Adrenal gland (tissue), 19 donors: ENCODE measurements at regions of chr2 and their contacts with region 1.

Region 1: GRCh38 chr2:187842978-187843847 is 289.0 kb upstream of the TFPI start:
- DNase-seq: peak in 1 of 7 donors; percentile 5
- H3K4me3 ChIP-seq: no peak overlapping the region
- H3K27ac ChIP-seq: no peak overlapping the region
- H3K4me1 ChIP-seq: no peaks in the 10 kb centered on the region
- H3K27me3 ChIP-seq: no peaks in the 10 kb centered on the region
- CTCF ChIP-seq: peak; percentile 46 to 69 (median 56)
- POLR2A ChIP-seq: no peak

Region 2: GRCh38 chr2:187581125-187581896 is 261.9 kb before region 1 on chr2:
- intact Hi-C with region 1: loop called in 1 of 2 experiments (anchors 5 kb)
- DNase-seq: peak in 2 of 7 donors; percentile 24 to 28
- H3K4me3 ChIP-seq: peak overlapping the region in 1 of 4 donors; percentile 39
- H3K27ac ChIP-seq: no peak overlapping the region
- H3K4me1 ChIP-seq: no peaks in the 10 kb centered on the region
- H3K27me3 ChIP-seq: no peaks in the 10 kb centered on the region
- CTCF ChIP-seq: peak; percentile 62 to 74 (median 66)
- POLR2A ChIP-seq: no peak

Region 3: DNA sequence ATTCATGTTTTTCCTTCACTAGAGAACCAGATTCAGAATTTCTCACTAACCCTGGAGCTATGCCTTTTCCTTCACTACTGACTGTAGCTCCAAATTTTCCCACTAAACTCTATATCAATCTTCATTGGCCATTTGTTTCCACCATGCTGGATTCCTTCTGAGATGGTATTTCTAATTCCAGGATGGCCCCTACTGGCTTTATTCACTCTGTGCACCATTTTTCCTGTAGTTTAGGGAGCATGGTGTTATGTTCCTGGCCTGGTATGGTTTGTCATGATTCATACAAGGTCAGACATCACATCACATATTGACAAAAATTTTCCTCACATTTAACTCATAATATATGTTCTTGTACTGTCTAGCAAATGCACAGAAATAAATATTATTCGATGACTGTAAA is 59.8 kb before region 1 on chr2:
- intact Hi-C with region 1: no loop called
- DNase-seq: no peak
- H3K4me3 ChIP-seq: no peak overlapping the region
- H3K27ac ChIP-seq: no peak overlapping the region
- H3K4me1 ChIP-seq: no peaks in the 10 kb centered on the region
- H3K27me3 ChIP-seq: no peaks in the 10 kb centered on the region
- CTCF ChIP-seq: no peak
- POLR2A ChIP-seq: no peak